ENCODE measurements at regions of chr1 and their contacts with region 1.

Region 1: DNA sequence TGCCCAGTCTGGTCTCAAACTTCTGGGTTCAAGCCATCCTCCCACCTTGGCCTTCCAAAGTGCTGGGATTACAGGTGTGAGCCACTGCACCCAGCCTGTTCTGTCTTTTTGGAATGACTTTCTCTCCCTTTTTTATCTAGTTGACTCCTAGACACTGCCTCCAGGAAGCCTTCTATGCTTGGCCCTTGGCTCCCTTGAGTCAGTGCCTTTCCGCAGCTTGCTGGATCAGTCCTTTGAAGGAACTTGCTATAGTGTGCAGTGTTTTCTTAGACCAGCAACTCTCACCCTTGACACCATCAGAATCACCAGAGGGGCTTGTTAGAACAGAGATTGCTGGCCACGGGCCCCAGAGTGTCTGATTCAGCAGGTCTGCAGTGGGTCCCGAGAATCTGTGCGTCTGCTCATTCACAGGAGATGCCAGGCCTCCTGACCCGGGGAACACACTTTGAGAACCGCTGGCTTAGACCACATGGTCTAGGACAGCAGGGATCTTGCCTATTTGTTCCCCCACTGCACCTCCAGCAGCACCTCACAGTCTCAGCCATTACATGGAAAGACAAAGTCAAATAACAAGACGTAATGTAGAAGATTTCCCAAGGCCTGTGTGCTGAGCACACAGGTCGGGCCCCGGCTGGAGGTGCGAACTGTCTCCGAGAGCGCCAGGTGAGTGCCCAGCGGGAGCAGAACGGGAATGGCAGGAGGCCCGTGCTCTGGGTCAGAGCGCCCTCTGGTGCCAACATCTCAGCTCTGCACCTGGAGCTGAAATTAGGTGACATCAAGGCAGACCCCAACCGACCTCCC is 27.4 kb upstream of the CTPS1 start:
- DNase-seq: peak; percentile 69
- H3K4me3 Mint-ChIP-seq: no peak overlapping the region
- H3K27ac Mint-ChIP-seq: no peak overlapping the region
- H3K4me1 Mint-ChIP-seq: peaks cover 4% of the 10 kb centered on the region
- H3K27me3 Mint-ChIP-seq: peaks cover 18% of the 10 kb centered on the region

Region 2: GRCh38 chr1:40849801-40850592 is 102.1 kb before region 1 on chr1:
- CTCF ChIA-PET with region 1: interaction called, 18 read pairs
- intact Hi-C with region 1: loop called (anchors 1 kb)
- DNase-seq: peak; percentile 87
- H3K4me3 Mint-ChIP-seq: no peak overlapping the region
- H3K27ac Mint-ChIP-seq: no peak overlapping the region
- H3K4me1 Mint-ChIP-seq: peaks cover 8% of the 10 kb centered on the region
- H3K27me3 Mint-ChIP-seq: no peaks in the 10 kb centered on the region

Region 3: DNA sequence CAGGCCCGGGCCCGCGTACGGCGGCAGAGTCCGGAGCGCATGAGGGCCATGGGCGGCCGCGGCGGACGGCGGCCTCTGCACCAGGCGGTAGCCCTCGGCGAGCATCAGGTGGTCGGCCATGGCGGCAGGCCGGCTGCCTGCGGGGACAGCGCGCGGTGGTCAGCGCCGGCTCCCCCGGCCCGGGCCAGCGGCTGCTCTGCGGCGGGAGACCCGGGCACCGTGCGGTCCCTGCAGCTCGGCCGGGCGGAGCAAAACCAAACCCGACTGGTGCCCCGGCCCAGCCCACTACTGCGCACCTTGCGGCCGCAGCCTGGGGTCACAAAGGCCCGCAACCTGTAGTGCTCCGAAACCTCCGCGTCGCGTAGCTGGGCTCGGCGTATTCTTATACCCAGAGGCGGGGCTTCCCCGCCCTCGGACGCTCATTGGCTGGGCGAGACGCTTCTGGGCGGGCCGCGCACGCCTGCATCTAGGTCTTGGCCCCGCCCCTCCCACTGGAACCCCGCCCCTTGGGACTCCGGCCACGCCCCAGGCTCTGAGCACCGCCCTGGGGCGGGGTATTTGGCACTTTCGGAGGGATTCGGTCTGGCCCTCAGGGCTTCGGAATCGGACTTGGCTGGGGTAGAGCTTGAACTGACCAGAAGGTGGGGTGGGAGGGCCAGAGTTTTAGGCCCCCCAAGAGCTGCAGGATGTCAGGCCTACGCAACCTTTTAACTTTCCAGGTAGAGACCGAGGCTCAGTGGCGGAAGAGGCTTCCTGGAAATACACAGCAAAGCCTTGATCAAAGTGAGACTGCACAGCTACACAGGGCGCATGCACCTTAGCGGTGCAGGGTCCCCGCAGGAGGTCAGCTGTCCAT is 89.9 kb before region 1 on chr1 and contains the start of gene CITED4:
- CTCF ChIA-PET with region 1: interaction called, 24 read pairs
- intact Hi-C with region 1: loop called (anchors 1 kb)
- DNase-seq: peak; percentile 95
- H3K4me3 Mint-ChIP-seq: peak within 1 kb of the TSS; percentile 92
- H3K27ac Mint-ChIP-seq: peak within 1 kb of the TSS; percentile 95
- H3K4me1 Mint-ChIP-seq: peaks cover 11% of the 10 kb centered on the region
- H3K27me3 Mint-ChIP-seq: peaks cover 8% of the 10 kb centered on the region
- total RNA-seq, gene CITED4: 2.4 TPM

Region 4: DNA sequence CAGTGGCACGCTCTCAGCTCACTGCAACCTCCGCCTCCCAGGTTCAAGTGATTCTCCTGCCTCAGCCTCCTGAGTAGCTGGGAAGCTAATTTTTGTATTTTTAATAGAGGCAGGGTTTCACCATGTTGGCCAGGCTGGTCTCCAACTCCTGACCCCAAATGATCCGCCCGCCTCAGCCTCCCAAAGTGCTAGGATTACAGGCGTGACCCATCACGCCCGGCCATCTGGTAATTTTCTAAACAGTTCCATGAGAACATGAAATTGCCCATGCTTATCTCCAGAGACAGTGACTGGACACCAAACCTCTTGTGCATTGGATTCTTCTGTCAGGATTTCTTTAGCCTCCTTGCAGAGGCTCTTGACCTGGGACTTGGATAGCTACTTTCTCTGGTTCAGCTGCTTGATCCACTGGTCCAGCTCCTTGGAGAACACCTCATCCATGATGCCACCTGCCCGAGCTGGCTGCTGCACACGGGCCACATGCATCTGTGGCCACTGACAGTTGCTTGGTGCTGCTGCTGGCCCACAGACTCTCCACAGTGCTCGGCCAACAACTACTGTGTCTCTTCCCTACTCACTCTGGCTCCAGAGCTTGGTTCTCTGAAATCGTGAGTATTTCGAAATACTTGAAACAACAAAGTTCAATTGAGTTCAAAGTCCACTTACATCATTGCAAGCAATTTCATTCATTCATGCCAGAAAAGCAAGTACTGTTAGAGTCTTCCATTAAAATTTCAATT is 12.7 kb before region 1 on chr1:
- CTCF ChIA-PET with region 1: interaction called, 41 read pairs
- intact Hi-C with region 1: no loop called
- DNase-seq: no peak
- H3K4me3 Mint-ChIP-seq: no peak overlapping the region
- H3K27ac Mint-ChIP-seq: no peak overlapping the region
- H3K4me1 Mint-ChIP-seq: no peaks in the 10 kb centered on the region
- H3K27me3 Mint-ChIP-seq: no peaks in the 10 kb centered on the region

Region 5: GRCh38 chr1:41003640-41004220 is 51.6 kb after region 1 on chr1:
- CTCF ChIA-PET with region 1: interaction called, 12 read pairs
- intact Hi-C with region 1: no loop called
- DNase-seq: peak; percentile 98
- H3K4me3 Mint-ChIP-seq: no peak overlapping the region
- H3K27ac Mint-ChIP-seq: no peak overlapping the region
- H3K4me1 Mint-ChIP-seq: peaks cover 38% of the 10 kb centered on the region
- H3K27me3 Mint-ChIP-seq: no peaks in the 10 kb centered on the region

Region 6: DNA sequence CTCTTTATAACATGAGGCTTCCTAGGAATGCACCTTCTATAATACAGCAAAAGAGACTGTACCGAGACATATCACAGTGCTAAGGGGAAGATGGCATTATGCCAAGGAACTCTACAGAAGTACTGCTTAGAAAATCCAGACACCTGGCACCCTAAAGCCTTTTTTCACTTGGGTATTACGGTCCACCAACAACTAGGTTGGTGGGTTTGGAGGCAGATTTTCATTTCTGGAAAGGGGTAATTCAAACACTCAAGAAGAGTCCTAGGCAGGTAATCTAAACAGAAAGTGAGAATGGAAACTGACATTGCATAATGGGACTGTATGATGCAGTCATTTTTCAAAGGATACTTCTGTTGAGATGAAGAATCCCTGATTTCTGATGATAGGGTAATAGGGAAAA is 270.4 kb after region 1 on chr1:
- CTCF ChIA-PET with region 1: no interaction called
- intact Hi-C with region 1: no loop called
- DNase-seq: no peak
- H3K4me3 Mint-ChIP-seq: no peak overlapping the region
- H3K27ac Mint-ChIP-seq: no peak overlapping the region
- H3K4me1 Mint-ChIP-seq: peaks cover 7% of the 10 kb centered on the region
- H3K27me3 Mint-ChIP-seq: no peaks in the 10 kb centered on the region

Region 7: GRCh38 chr1:41341772-41342562 is 389.8 kb after region 1 on chr1:
- CTCF ChIA-PET with region 1: no interaction called
- intact Hi-C with region 1: no loop called
- DNase-seq: no peak
- H3K4me3 Mint-ChIP-seq: no peak overlapping the region
- H3K27ac Mint-ChIP-seq: no peak overlapping the region
- H3K4me1 Mint-ChIP-seq: peaks cover 5% of the 10 kb centered on the region
- H3K27me3 Mint-ChIP-seq: peaks cover 26% of the 10 kb centered on the region